ENCODE measurements at regions of chr5 and their contacts with region 1.

Region 1: GRCh38 chr5:138725138-138725833 is 27.9 kb upstream of the CTNNA1 start:
- DNase-seq: peak; percentile 100
- H3K4me3 Mint-ChIP-seq: peak overlapping the region; percentile 51
- H3K27ac Mint-ChIP-seq: peak overlapping the region; percentile 96
- H3K4me1 Mint-ChIP-seq: peaks cover 39% of the 10 kb centered on the region
- H3K27me3 Mint-ChIP-seq: no peaks in the 10 kb centered on the region
- CTCF ChIP-seq: peak; percentile 55

Region 2: GRCh38 chr5:138641547-138642298 is 83.6 kb before region 1 on chr5:
- CTCF ChIA-PET with region 1: interaction called, 22 read pairs
- POLR2A ChIA-PET with region 1: interaction called, 4 read pairs
- intact Hi-C with region 1: loop called (anchors 1 kb)
- DNase-seq: peak; percentile 91
- H3K4me3 Mint-ChIP-seq: no peak overlapping the region
- H3K27ac Mint-ChIP-seq: no peak overlapping the region
- H3K4me1 Mint-ChIP-seq: peaks cover 4% of the 10 kb centered on the region
- H3K27me3 Mint-ChIP-seq: no peaks in the 10 kb centered on the region
- CTCF ChIP-seq: peak; percentile 97

Region 3: GRCh38 chr5:138654281-138654867 is 70.9 kb before region 1 on chr5:
- CTCF ChIA-PET with region 1: interaction called, 23 read pairs
- POLR2A ChIA-PET with region 1: interaction called, 4 read pairs
- intact Hi-C with region 1: loop called (anchors 2 kb)
- DNase-seq: no peak
- H3K4me3 Mint-ChIP-seq: no peak overlapping the region
- H3K27ac Mint-ChIP-seq: no peak overlapping the region
- H3K4me1 Mint-ChIP-seq: no peaks in the 10 kb centered on the region
- H3K27me3 Mint-ChIP-seq: no peaks in the 10 kb centered on the region
- CTCF ChIP-seq: no peak

Region 4: DNA sequence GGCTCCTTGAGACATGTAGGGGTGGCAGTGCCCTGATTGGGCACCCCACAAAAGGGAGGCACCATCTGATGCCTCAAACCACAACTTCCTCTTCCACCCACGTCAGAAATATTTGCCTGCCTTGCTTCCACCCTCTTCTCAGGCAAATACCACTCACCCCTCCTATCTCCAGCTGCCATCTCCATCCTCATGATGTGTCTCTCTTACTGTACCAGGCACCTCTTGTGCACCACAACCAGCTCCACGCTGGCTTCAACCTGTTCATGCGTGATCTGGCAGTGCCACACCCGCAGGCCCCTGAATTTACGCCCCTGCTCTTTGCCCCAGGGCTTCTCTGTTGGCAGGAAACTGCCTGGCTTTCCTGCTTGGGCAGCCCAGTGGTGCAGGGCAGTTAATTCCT is 62.3 kb before region 1 on chr5:
- CTCF ChIA-PET with region 1: interaction called, 5 read pairs
- POLR2A ChIA-PET with region 1: interaction called, 16 read pairs
- intact Hi-C with region 1: no loop called
- DNase-seq: peak; percentile 27
- H3K4me3 Mint-ChIP-seq: no peak overlapping the region
- H3K27ac Mint-ChIP-seq: no peak overlapping the region
- H3K4me1 Mint-ChIP-seq: peaks cover 29% of the 10 kb centered on the region
- H3K27me3 Mint-ChIP-seq: no peaks in the 10 kb centered on the region
- CTCF ChIP-seq: no peak

Region 5: GRCh38 chr5:138702308-138703077 is 22.8 kb before region 1 on chr5:
- CTCF ChIA-PET with region 1: interaction called, 5 read pairs
- POLR2A ChIA-PET with region 1: interaction called, 13 read pairs
- intact Hi-C with region 1: no loop called
- DNase-seq: peak; percentile 47
- H3K4me3 Mint-ChIP-seq: no peak overlapping the region
- H3K27ac Mint-ChIP-seq: no peak overlapping the region
- H3K4me1 Mint-ChIP-seq: no peaks in the 10 kb centered on the region
- H3K27me3 Mint-ChIP-seq: no peaks in the 10 kb centered on the region
- CTCF ChIP-seq: no peak